Ascending aorta (tissue), 2 donors: ENCODE measurements at regions of chr9 and their contacts with region 1.

Region 1: DNA sequence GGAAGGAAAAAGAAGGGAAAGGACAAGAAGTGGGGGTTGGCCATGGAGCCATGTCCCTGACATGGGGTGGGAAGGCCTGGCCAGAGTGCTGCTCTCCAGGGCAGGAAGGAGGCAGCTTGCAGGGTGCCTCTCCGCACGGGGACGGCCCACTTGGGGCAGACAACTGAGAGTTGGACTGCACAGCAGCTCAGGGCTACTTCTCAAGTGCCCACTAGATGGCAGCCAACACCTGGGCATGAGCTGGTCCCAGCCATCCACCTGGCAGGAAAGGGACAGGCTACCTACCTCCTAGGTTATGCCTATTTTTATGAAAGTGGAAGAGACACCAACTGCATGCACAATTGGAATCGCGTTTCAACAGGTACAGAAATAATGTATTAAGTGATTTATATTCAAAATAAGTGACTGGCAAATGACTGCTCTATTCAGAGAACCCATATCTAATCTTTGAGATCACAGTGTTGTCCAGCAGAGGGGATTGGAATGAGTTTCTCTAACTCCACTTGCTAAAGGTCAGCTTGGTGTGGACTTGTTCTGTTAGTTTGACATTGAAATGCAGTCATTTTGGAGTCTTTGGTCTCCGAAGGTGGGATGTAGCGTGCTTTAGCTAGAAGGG is 113.4 kb downstream of the SYK start:
- DNase-seq: peak in 1 of 2 donors; percentile 77
- H3K4me3 ChIP-seq: no peak overlapping the region
- H3K27ac ChIP-seq: peak overlapping the region in 1 of 2 donors; percentile 15
- H3K4me1 ChIP-seq: peaks cover 0 to 12% of the 10 kb centered on the region in 2 donors
- H3K27me3 ChIP-seq: no peaks in the 10 kb centered on the region
- CTCF ChIP-seq: peak; percentile 91 to 93 (median 91)

Region 2: GRCh38 chr9:90927496-90927895 is 12.5 kb after region 1 on chr9:
- intact Hi-C with region 1: no loop called
- DNase-seq: no peak
- H3K4me3 ChIP-seq: no peak overlapping the region
- H3K27ac ChIP-seq: no peak overlapping the region
- H3K4me1 ChIP-seq: peaks cover 0 to 5% of the 10 kb centered on the region in 2 donors
- H3K27me3 ChIP-seq: no peaks in the 10 kb centered on the region
- CTCF ChIP-seq: no peak

Region 3: DNA sequence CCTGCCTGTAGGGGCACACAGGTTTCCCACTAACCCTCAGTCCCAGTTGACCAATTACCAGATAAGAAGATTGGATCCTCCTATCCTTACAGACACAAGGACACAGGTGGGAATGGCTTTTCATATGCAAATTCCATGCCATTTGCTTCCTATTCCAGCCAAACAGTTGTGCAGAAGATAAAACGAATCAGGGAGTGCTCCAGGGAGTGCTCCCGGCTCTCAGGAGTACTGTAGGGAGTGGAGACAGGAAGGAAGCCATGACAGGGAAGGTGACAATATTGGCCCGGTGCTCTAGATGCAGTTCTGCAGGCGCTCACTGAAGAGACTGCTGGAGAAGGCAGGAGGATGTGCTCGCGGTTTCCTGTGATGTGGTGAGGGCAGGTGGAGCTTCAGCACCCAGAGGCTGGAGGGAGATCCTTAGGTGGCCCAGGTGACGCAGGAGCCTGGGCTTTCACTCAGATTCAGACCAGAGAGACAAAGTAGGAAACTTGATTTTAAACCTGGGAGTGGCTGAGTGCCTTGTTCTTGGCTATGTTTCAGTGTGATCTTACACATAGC is 186.7 kb after region 1 on chr9:
- intact Hi-C with region 1: loop called (anchors 5 kb)
- DNase-seq: no peak
- H3K4me3 ChIP-seq: no peak overlapping the region
- H3K27ac ChIP-seq: peak overlapping the region; percentile 82 to 85
- H3K4me1 ChIP-seq: peaks cover 8 to 17% of the 10 kb centered on the region in 2 donors
- H3K27me3 ChIP-seq: no peaks in the 10 kb centered on the region
- CTCF ChIP-seq: no peak

Region 4: DNA sequence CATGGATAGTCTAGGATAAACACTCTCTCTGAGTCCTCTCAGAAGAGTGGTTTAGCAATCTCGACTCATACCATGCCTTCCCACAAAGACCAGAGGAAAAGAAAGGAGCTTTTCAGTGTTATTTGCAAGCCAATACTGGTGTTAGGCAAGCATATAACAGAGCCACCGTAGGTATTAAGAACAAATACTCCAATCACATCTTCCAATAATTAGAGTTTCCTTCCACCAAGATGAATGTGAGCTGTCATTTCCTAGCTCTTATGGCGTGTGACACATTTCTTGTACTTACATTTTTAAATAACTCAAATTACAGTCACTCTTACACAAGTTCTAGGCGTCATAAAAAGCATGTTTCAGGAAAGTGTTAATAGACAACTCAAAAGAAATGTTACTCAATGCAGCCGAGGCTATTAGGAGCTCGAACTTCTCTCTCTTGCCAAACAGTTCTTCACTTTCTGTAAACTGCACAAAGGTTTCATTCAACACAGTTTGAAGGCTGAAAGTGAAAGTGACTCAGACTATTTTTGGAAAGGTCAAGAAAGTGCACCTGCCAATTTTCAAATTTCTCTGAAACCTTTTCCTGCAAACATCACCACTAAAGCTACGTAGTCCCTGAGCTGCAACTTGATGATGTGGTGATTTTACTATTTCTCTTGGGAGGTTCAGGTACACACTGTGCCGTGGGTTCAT is 292.9 kb after region 1 on chr9:
- intact Hi-C with region 1: loop called (anchors 5 kb)
- DNase-seq: no peak
- H3K4me3 ChIP-seq: peak overlapping the region in 1 of 2 donors; percentile 34
- H3K27ac ChIP-seq: peak overlapping the region; percentile 73
- H3K4me1 ChIP-seq: peaks cover 0 to 10% of the 10 kb centered on the region in 2 donors
- H3K27me3 ChIP-seq: no peaks in the 10 kb centered on the region
- CTCF ChIP-seq: no peak

Region 5: GRCh38 chr9:91433180-91433579 is 518.2 kb after region 1 on chr9:
- intact Hi-C with region 1: loop called (anchors 2 kb)
- DNase-seq: no peak
- H3K4me3 ChIP-seq: no peak overlapping the region
- H3K27ac ChIP-seq: no peak overlapping the region
- H3K4me1 ChIP-seq: no peaks in the 10 kb centered on the region
- H3K27me3 ChIP-seq: no peaks in the 10 kb centered on the region
- CTCF ChIP-seq: peak; percentile 55 to 65 (median 58)

Region 6: DNA sequence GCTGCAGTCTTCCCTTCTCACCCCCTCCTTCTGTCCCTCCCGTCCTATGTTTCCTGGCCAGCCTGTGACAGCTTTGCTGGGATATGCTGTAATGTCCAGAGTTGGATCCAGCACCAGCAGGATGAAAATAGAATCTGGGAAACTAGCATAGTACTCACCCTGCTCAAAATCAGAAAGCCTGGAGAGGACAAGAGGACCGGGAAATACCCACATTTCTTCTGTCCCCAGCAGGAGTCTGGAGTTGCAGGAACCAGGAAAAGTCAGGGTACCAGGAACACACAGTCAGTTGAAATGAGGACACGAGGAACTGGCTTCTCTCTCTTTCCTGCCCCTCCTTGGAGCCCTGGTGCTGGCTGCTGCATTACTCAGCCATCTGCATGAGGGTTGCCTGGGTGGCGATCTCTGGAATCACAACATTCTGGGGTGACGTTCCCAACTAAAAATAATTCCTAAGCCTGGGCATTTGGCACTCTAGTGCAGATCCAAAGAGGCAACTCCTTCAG is 568.3 kb after region 1 on chr9:
- intact Hi-C with region 1: loop called (anchors 5 kb)
- DNase-seq: peak; percentile 29 to 85
- H3K4me3 ChIP-seq: peak overlapping the region in 1 of 2 donors; percentile 34
- H3K27ac ChIP-seq: peak overlapping the region; percentile 76 to 84
- H3K4me1 ChIP-seq: peaks cover 0 to 7% of the 10 kb centered on the region in 2 donors
- H3K27me3 ChIP-seq: no peaks in the 10 kb centered on the region
- CTCF ChIP-seq: no peak

Region 7: GRCh38 chr9:91681461-91682305 is 766.7 kb after region 1 on chr9:
- intact Hi-C with region 1: loop called (anchors 1 kb)
- DNase-seq: peak in 1 of 2 donors; percentile 78
- H3K4me3 ChIP-seq: peak overlapping the region in 1 of 2 donors; percentile 12
- H3K27ac ChIP-seq: no peak overlapping the region
- H3K4me1 ChIP-seq: peaks cover 0 to 3% of the 10 kb centered on the region in 2 donors
- H3K27me3 ChIP-seq: no peaks in the 10 kb centered on the region
- CTCF ChIP-seq: peak; percentile 49 to 82 (median 66)

Region 8: GRCh38 chr9:91727316-91727861 is 812.4 kb after region 1 on chr9:
- intact Hi-C with region 1: loop called (anchors 2 kb)
- DNase-seq: no peak
- H3K4me3 ChIP-seq: no peak overlapping the region
- H3K27ac ChIP-seq: no peak overlapping the region
- H3K4me1 ChIP-seq: no peaks in the 10 kb centered on the region
- H3K27me3 ChIP-seq: no peaks in the 10 kb centered on the region
- CTCF ChIP-seq: peak; percentile 18 to 56 (median 51)